ENCODE measurements at regions of chr21 and their contacts with region 1.

Region 1: DNA sequence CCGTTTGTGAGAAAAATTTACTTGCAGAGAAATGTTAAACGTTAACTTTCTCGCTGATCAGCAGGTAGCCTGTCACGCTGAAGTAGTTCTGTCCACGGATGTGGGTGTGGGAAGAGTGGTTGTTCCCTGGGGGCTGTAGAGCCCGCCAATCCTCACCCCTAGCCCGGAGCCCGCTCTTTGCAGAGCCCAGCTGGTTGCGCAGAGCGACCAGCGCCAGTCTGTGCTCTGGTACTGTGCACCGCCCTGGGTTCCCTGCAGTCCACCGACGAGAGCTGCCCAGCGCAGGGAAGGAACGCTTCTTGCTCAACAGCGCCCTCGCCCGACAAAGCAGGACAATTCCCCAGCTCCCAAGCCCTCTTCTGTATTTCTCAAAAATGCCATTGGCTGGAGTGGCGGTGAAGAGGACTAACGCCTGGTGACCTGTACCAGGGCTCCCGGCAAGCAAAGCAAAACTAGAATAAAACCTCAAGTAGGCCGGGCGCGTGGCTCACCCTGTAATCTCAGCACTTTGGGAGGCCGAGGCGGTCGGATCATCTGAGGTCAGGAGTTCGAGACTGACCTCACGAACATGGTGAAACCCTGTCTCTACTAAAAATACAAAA is 3.3 kb downstream of the RIPPLY3 start:
- DNase-seq: peak; percentile 16 to 87
- H3K4me3 ChIP-seq: peak overlapping the region; percentile 39 to 53
- H3K27ac ChIP-seq: no peak overlapping the region
- H3K4me1 ChIP-seq: peaks cover 7 to 11% of the 10 kb centered on the region in 2 donors
- H3K27me3 ChIP-seq: no peaks in the 10 kb centered on the region
- CTCF ChIP-seq: peak; percentile 71 to 87 (median 79)

Region 2: DNA sequence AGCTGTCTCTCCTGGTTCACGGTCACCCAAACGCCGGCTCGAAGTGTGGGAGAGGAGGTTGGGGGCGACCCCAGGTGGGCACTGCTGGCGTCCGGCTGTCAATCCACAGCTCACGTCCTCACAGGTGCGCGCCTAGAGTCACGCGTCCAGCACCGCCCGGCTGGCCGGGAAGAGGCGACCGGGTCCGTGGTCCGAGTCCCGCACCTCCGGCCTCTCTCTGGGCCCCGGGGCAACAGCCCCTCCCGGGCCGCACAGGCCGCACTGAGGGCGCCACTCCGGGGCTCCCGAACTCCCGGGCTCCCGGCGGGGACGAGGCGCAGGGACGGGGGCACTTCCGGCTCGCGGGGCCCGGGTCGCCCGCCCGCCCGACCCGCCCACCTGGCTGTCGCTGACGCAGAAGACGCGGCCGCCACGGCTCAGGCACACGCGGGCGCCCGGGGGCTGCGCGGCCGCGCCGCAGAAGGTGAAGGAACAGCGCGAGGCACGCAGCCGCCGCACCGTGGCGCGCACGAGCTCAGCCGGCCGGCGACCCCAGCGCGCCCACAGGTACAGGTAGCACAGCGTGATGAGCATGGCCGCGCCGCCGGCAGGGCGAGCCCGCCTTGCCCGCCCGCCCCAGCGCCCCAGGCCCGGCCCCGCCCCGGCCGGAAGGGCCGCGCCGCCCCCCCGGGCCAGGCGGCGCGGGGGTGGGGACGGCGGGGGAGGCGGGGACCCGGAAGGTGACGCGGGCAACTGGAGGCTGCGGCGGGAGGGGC is 43.6 kb before region 1 on chr21 and contains the start of gene HLCS:
- intact Hi-C with region 1: loop called (anchors 5 kb)
- DNase-seq: peak in 1 of 2 donors; percentile 86
- H3K4me3 ChIP-seq: peak within 1 kb of the TSS; percentile 79 to 97
- H3K27ac ChIP-seq: peak within 1 kb of the TSS; percentile 86 to 89
- H3K4me1 ChIP-seq: peaks cover 2 to 5% of the 10 kb centered on the region in 2 donors
- H3K27me3 ChIP-seq: no peaks in the 10 kb centered on the region
- CTCF ChIP-seq: no peak
- total RNA-seq, gene HLCS: 10.7 TPM

Region 3: DNA sequence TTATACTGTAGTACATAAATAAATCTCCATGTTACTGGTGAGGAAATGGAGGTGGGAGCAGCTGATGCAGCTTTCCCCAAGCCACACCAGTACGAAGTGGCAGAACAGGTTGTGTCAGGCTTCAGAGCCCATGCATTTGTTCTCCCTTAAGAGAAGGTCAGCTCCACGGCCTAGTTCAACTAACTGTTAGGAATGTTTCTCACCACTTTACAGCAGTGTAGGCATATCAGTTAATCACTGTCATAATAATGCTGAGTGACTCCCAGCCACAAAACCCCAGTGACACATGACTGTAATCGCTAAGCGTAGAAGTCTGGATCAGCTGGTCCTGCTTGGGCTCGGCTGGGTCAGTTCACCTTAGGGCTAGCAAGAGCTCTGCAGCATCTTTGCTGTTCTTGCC is 166.9 kb after region 1 on chr21:
- intact Hi-C with region 1: no loop called
- DNase-seq: no peak
- H3K4me3 ChIP-seq: no peak overlapping the region
- H3K27ac ChIP-seq: no peak overlapping the region
- H3K4me1 ChIP-seq: peaks cover 0 to 5% of the 10 kb centered on the region in 2 donors
- H3K27me3 ChIP-seq: no peaks in the 10 kb centered on the region
- CTCF ChIP-seq: no peak

Measured in ascending aorta (tissue), 2 donors.